Mammary epithelial cell (primary cell): ENCODE measurements at regions of chr20 and their contacts with region 1.

Region 1: DNA sequence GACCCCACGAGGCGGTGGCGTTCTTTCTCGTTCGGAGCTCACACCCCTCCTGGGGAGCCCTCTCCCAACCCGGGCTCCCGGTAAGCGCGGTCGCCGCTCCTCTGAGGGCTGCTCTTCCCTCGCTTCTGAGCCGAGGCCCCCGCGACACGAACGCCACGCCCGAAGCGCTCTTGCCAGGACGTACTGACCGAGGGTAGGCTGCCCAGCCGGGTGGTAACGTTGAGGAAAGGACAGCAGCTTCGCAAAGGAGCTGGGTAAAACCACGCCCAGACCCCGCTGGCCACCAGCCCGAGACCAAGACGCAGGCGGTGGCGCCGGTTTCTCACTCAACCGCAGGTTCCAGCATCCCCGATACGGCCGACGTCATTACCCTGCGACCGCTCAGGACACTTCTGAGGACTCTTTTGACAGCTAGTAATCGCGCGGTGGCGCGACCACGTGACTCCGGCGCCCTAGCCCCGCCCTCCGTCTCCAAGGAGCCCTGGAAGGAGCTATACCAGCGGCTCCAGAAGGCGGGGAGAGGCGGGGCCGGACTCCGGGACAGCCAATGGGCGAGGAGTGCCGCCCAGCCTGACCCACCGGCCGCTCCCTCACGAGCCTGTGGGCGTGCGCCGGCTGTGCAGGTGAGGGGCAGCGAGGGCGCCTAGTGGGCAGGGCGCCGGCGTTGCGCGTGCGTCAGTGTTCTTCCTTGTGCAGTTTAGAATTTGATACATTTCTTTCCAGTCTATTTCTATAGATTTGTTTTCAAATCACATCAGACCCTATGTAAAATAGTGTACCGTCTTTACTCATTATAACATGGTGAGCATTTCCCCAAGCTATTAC is 4.0 kb upstream of the GZF1 start:
- DNase-seq: peak; percentile 100
- H3K4me3 ChIP-seq: peak overlapping the region; percentile 64 to 92 (median 71)
- H3K27ac ChIP-seq: peak overlapping the region; percentile 88
- H3K4me1 ChIP-seq: peaks cover 25% of the 10 kb centered on the region
- H3K27me3 ChIP-seq: no peaks in the 10 kb centered on the region
- CTCF ChIP-seq: peak in 1 of 2 donors; percentile 17

Region 2: DNA sequence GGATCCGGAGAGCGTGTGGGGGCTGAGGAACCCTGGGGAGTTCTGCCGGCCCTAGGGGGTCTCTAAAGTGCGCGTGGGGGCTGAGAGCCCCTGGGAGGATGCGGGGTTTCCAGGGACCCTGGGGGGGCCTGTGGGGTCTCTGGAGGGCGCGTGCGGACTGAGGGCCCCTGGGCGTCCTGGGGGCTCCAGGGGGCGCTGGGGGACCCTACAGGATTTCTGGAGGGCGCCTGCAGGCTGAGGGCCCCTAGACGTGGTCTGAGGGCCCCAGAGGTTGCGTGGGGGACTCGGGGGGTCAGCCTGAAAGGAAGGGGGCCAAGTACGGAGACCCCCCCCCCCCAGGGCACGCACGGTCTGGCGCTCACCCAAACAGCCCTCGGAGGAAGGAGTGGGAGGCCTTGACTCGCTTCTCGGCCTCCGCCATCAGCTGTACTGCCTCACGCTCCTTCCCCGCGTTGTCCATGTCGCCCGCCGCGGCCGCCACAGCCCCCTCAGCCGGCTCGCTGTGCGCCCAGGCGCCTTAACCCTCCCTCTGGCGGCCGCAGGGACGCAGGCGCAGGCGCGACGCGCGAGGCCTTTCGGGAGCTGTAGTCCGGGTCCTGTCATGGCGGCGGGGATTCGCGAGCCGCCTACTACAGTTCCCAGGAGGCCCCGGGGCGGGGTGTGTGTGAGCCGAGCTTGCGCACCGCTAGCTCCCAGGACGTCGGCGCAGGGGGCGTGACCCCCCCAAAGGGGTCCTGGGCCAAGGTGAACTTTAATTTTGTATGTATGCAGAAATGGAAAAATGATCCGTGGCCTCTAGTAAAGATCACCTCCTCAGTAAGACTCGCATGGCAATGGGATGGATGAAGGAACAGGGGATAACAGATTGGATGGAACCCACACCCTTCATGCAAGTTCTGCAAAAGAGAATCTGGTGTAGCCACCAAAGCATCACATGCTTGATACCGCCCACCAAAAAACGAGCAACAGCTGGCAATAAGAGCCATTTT is 63.3 kb after region 1 on chr20 and contains the start of gene NAPB:
- CTCF ChIA-PET with region 1: no interaction called
- dilution Hi-C with region 1: no loop called
- in situ Hi-C with region 1: no loop called
- intact Hi-C with region 1: loop called (anchors 1 kb)
- DNase-seq: peak; percentile 84
- H3K4me3 ChIP-seq: peak within 1 kb of the TSS; percentile 69 to 86 (median 75)
- H3K27ac ChIP-seq: peak within 1 kb of the TSS; percentile 70
- H3K4me1 ChIP-seq: peaks cover 13% of the 10 kb centered on the region
- H3K27me3 ChIP-seq: no peaks in the 10 kb centered on the region
- CTCF ChIP-seq: peak in 1 of 2 donors; percentile 56
- total RNA-seq, gene NAPB: 6.6 to 8.8 TPM

Region 3: GRCh38 chr20:23482138-23482537 is 124.2 kb after region 1 on chr20:
- CTCF ChIA-PET with region 1: no interaction called
- dilution Hi-C with region 1: no loop called
- in situ Hi-C with region 1: no loop called
- intact Hi-C with region 1: no loop called
- DNase-seq: no peak
- H3K4me3 ChIP-seq: no peak overlapping the region
- H3K27ac ChIP-seq: no peak overlapping the region
- H3K4me1 ChIP-seq: no peaks in the 10 kb centered on the region
- H3K27me3 ChIP-seq: no peaks in the 10 kb centered on the region
- CTCF ChIP-seq: no peak

Region 4: GRCh38 chr20:23492292-23492691 is 134.3 kb after region 1 on chr20:
- CTCF ChIA-PET with region 1: no interaction called
- dilution Hi-C with region 1: no loop called
- in situ Hi-C with region 1: no loop called
- intact Hi-C with region 1: no loop called
- DNase-seq: no peak
- H3K4me3 ChIP-seq: no peak overlapping the region
- H3K27ac ChIP-seq: no peak overlapping the region
- H3K4me1 ChIP-seq: no peaks in the 10 kb centered on the region
- H3K27me3 ChIP-seq: no peaks in the 10 kb centered on the region
- CTCF ChIP-seq: no peak